ENCODE measurements at regions of chr17 and their contacts with region 1.

Region 1: GRCh38 chr17:53722407-53722806 is 100.3 kb upstream of the KIF2B start:
- DNase-seq: no peak
- H3K4me3 ChIP-seq: no peak overlapping the region
- H3K27ac ChIP-seq: no peak overlapping the region
- H3K4me1 ChIP-seq: no peaks in the 10 kb centered on the region
- H3K27me3 ChIP-seq: no peaks in the 10 kb centered on the region
- CTCF ChIP-seq: no peak
- POLR2A ChIP-seq: no peak

Region 2: DNA sequence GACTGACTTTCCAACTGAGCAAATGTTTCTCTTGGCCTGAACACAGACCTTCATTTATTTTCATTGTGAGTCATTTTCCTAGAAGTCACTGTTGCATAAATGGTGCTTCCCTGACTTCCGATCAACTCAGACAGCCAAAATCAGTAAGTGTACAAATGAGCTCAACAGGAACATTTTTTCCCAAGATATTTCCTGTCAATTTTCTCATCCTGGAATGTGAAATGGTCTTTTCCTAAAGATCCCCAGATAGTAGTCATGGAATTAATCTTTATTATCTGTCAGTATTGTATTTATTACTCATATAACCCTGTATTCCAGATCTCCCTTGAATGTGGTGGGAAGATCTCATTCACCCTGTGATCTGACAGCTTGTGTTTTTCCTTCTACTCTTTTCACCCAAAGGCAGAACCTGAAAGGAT is 260.0 kb before region 1 on chr17:
- intact Hi-C with region 1: loop called (anchors 10 kb)
- DNase-seq: no peak
- H3K4me3 ChIP-seq: no peak overlapping the region
- H3K27ac ChIP-seq: no peak overlapping the region
- H3K4me1 ChIP-seq: peaks cover 0 to 4% (median 0%) of the 10 kb centered on the region in 3 donors
- H3K27me3 ChIP-seq: no peaks in the 10 kb centered on the region
- CTCF ChIP-seq: no peak
- POLR2A ChIP-seq: no peak